Activated CD4-positive, alpha-beta memory T cell treated with anti-CD3 and anti-CD28 coated beads for 36 hours (primary cell): ENCODE measurements at regions of chr2 and their contacts with region 1.

Region 1: DNA sequence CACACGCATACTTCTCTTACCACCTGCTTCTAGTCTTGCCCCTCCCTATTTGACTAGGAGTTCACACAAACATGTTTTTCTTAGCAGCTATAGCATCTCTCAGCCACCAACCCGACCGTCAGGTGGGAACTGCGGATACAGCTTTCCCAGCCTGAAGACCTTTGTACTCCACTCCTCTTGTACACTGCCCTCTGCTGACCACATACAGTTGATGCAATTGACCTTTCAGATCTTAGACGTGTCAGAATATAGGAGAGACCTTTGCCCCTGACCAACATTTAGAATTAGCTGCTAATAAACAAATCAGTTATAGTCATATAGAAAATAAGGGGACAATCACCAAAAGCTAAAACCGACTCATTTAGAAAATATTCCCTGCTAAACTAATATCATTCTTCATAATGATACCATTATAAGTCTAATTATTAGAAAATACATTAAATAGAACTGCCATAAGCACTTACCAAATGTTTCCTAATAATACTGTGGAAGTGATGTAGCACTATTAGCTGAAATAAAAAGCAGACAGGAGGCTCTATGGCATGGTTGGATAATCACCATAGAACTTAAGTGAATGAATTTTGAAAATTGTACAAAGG is 208.4 kb downstream of the RAD51AP2 start:
- DNase-seq: no peak
- H3K4me3 Mint-ChIP-seq: no peak overlapping the region
- H3K27ac Mint-ChIP-seq: no peak overlapping the region
- H3K4me1 Mint-ChIP-seq: no peaks in the 10 kb centered on the region
- H3K27me3 Mint-ChIP-seq: no peaks in the 10 kb centered on the region

Region 2: GRCh38 chr2:16773080-16773713 is 536.6 kb before region 1 on chr2:
- CTCF ChIA-PET with region 1: no interaction called
- POLR2A ChIA-PET with region 1: no interaction called
- intact Hi-C with region 1: loop called (anchors 2 kb)
- DNase-seq: peak; percentile 16
- H3K4me3 Mint-ChIP-seq: no peak overlapping the region
- H3K27ac Mint-ChIP-seq: no peak overlapping the region
- H3K4me1 Mint-ChIP-seq: no peaks in the 10 kb centered on the region
- H3K27me3 Mint-ChIP-seq: peaks cover 13% of the 10 kb centered on the region